ENCODE measurements at regions of chr1 and their contacts with region 1.

Region 1: GRCh38 chr1:160046494-160047110 is 14.8 kb upstream of the PIGM start:
- DNase-seq: peak; percentile 47
- H3K4me3 Mint-ChIP-seq: peak overlapping the region; percentile 44
- H3K27ac Mint-ChIP-seq: no peak overlapping the region
- H3K4me1 Mint-ChIP-seq: peaks cover 12% of the 10 kb centered on the region
- H3K27me3 Mint-ChIP-seq: peaks cover 39% of the 10 kb centered on the region

Region 2: DNA sequence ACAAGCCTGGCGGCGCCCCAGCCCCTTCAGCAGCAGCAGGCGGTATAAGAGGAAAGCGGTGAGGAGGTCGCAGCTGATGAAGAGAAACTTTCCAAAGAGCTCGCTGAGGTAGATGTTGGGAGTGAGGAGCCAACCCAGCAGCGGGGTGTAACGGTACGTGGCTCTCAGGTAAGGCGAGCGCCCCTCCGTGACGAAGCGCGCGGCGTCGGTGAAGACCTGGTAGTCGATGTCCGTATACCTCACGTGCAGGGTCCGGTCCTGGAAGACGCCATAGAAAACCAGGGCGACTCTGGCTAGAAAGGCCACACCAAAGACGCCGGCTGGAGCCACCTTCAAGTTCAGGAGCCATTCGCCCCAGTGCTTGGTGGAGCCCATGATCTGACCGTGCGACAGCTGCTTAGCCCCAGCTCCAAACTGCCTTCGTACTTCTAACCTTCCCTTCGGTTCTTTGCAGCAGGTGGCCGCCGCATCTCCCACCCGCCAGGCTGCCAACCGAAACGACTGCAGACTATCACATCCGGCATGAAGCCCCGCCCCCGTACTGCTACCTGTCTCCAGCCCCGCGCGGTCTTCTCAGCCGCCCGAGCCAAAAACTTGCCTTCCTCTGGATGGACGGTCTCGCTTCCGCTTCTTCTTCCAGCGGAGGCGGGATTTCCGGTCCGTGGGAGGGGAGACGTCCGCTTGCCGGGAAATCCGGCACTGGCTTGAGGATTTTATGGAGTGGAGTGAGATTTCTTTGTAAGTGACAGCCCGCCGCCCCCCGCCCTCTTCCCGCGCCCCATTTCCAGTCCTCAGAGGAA is 15.0 kb before region 1 on chr1 and contains the start of gene PIGM:
- CTCF ChIA-PET with region 1: interaction called, 25 read pairs
- POLR2A ChIA-PET with region 1: interaction called, 3 read pairs
- DNase-seq: peak; percentile 95
- H3K4me3 Mint-ChIP-seq: peak within 1 kb of the TSS; percentile 90
- H3K27ac Mint-ChIP-seq: peak within 1 kb of the TSS; percentile 80
- H3K4me1 Mint-ChIP-seq: peaks cover 32% of the 10 kb centered on the region
- H3K27me3 Mint-ChIP-seq: peaks cover 2% of the 10 kb centered on the region
- total RNA-seq, gene PIGM: 5.2 to 5.7 TPM

Region 3: DNA sequence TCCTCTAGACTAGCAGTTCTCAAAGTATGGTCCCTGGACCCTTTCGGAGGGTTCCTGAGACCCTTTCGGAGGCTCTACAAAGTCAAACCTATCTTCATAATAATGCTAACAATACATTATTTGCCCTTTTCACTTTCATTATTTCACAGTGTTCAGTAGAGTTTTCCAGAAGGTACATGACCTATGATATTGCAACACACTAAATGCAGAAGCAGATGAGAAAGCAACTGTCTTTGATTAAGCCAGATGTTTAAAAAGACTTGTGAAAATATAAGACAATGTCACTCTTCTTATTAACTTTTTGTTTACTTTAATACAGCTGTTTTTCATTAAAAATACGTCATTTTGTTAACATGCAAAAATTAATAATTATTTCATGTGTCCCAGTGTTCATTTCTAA is 17.6 kb after region 1 on chr1:
- CTCF ChIA-PET with region 1: interaction called, 13 read pairs
- POLR2A ChIA-PET with region 1: no interaction called
- DNase-seq: no peak
- H3K4me3 Mint-ChIP-seq: no peak overlapping the region
- H3K27ac Mint-ChIP-seq: no peak overlapping the region
- H3K4me1 Mint-ChIP-seq: no peaks in the 10 kb centered on the region
- H3K27me3 Mint-ChIP-seq: peaks cover 38% of the 10 kb centered on the region

Region 4: GRCh38 chr1:160070243-160071163 is 23.9 kb after region 1 on chr1:
- CTCF ChIA-PET with region 1: interaction called, 112 read pairs
- POLR2A ChIA-PET with region 1: interaction called, 3 read pairs
- DNase-seq: peak; percentile 46
- H3K4me3 Mint-ChIP-seq: peak overlapping the region; percentile 69
- H3K27ac Mint-ChIP-seq: no peak overlapping the region
- H3K4me1 Mint-ChIP-seq: peaks cover 18% of the 10 kb centered on the region
- H3K27me3 Mint-ChIP-seq: peaks cover 64% of the 10 kb centered on the region

Region 5: GRCh38 chr1:160078512-160079195 is 32.1 kb after region 1 on chr1:
- CTCF ChIA-PET with region 1: interaction called, 112 read pairs
- POLR2A ChIA-PET with region 1: interaction called, 5 read pairs
- DNase-seq: peak; percentile 71
- H3K4me3 Mint-ChIP-seq: no peak overlapping the region
- H3K27ac Mint-ChIP-seq: no peak overlapping the region
- H3K4me1 Mint-ChIP-seq: no peaks in the 10 kb centered on the region
- H3K27me3 Mint-ChIP-seq: peaks cover 63% of the 10 kb centered on the region

Region 6: DNA sequence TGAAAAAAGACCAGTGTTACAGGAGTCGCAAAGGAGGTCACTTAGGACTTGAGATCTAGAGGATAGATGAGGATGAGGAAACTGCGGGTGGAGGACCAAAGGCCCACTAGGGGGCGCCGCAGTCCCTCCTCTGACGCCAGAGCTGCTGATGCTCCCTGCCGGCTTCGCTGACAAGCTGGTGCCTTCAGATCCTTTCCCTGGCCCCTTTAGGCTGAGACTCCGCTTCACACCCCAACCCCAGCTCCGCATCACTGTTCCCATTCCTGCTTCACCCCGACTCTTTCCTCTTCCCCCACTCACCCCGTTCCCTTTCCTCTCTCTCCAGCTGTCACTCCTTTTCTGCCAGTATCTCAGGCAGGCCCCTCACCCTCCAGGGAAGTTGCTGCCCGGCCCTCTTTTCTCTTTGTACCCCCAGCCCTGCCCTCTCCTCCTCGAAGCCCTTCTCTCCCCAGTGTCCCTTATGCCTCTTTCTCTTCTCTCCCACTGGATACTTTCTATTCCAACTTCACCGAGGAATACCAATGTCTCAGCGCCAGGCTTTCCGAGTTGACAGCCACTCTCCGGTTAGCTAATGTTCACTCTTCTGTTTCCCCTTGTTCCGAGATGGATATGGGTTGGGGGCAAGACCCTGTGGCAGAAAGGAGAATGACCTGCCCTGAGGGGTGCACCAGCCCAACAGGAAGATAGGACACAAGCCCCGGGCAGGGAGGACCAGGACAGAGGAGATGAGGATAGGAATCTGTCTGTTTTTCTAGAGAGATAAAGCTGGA is 39.3 kb after region 1 on chr1:
- CTCF ChIA-PET with region 1: interaction called, 112 read pairs
- POLR2A ChIA-PET with region 1: no interaction called
- DNase-seq: peak; percentile 77
- H3K4me3 Mint-ChIP-seq: no peak overlapping the region
- H3K27ac Mint-ChIP-seq: no peak overlapping the region
- H3K4me1 Mint-ChIP-seq: peaks cover 9% of the 10 kb centered on the region
- H3K27me3 Mint-ChIP-seq: peaks cover 27% of the 10 kb centered on the region